ENCODE measurements at regions of chr5 and their contacts with region 1.

Region 1: DNA sequence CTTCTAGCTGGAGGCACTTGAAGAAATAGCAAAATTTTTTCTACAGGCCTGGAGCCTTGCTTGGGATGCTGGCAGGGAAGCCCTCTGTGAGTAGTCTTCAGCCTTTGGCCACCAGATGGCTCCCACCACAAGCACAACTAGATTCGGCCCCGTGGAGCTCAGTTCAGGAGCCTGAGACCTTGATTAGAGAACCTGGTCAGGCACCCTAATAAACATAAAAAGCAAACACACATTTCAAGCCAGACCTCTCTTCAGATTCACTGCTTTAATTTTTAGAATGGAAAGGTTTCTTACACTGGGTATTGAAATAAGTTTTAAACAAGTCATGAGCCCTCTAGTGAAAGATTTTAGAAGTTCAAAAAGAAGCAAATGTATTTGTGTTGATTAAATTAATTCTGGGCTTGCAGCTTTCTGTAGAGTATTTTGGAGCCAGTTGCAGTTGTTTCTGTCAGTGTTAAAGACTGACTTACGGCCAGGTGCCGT is 41.4 kb downstream of the GLRX start:
- DNase-seq: peak; percentile 81
- H3K27ac ChIP-seq: no peak overlapping the region
- CTCF ChIP-seq: peak; percentile 95

Region 2: DNA sequence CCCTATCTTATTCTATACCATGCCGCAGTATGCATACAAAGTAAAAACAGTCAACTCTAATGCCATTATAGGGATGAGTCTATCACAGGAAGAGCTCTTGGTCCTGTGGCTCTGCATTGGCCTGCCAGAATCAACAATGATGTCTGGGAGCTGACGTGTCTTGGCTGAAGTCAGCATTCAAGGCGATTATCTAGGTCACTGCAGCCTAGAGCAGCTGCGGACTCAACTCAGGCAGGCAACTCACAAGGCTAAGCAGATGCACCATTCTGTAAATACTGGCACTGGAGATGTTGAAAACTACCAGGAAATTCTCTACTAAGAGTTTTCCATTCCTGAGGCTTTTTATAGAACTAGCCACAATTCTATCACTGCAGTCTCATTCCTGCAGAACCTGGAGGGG is 111.6 kb before region 1 on chr5:
- CTCF ChIA-PET with region 1: interaction called, 20 read pairs
- POLR2A ChIA-PET with region 1: no interaction called
- DNase-seq: no peak
- H3K27ac ChIP-seq: no peak overlapping the region
- CTCF ChIP-seq: no peak

Region 3: DNA sequence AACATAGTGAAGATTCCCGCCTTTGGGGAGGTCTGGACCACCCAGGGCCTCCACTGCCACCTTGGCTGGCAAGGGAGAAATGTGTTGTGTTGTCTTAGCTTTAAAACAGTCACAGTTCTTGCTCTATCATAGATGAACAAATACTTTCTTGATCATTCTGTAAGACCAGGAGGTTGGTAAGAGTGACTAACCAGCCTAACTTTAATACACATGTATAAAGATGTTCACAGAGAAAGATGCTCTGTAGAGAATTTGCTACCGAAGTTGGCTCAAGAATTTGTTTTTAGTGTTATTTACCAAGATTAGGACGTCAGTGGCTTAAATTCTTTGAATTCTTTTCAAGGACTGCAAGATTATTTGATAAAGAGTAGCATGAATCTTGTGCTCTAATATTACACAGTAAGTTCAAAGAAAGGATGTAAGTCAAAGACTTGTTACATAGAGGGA is 13.0 kb after region 1 on chr5:
- CTCF ChIA-PET with region 1: interaction called, 12 read pairs
- POLR2A ChIA-PET with region 1: no interaction called
- DNase-seq: no peak
- H3K27ac ChIP-seq: no peak overlapping the region
- CTCF ChIP-seq: no peak

Region 4: DNA sequence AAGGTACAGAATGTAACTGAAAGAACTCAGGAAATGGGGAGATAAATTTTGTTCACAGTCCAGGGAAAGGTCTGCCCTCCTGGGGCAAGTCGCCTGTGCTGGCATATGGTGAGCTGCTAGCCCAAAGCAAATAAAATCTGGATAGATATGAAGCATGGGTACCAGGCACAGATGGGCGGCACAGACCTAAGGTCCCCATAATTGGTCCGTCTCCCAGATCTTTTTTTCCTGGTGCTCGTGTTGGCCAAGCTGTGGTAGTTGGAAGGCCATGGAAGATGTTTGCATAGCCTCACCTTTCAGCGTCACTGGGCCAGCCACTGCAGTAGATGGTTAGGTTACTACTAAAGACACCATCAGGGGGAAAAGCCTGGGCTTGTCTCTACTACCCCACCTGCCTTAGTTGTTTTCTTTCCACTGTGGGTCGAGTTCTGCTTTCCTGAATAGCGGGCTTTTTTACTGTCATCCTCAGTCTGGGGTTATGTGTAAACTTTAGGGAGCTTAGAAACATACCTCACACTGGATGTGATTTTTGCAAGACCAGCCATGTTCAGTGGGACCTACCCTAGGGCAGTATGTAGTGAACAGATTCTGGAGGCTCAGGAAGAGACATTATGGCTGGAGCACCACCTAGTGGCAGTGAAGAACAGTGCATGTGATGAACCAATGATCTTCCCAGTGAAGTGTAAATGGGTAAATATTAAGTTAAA is 65.6 kb after region 1 on chr5:
- CTCF ChIA-PET with region 1: interaction called, 36 read pairs
- POLR2A ChIA-PET with region 1: no interaction called
- DNase-seq: peak; percentile 91
- H3K27ac ChIP-seq: no peak overlapping the region
- CTCF ChIP-seq: peak; percentile 98